ENCODE measurements at regions of chr6 and their contacts with region 1.

Region 1: DNA sequence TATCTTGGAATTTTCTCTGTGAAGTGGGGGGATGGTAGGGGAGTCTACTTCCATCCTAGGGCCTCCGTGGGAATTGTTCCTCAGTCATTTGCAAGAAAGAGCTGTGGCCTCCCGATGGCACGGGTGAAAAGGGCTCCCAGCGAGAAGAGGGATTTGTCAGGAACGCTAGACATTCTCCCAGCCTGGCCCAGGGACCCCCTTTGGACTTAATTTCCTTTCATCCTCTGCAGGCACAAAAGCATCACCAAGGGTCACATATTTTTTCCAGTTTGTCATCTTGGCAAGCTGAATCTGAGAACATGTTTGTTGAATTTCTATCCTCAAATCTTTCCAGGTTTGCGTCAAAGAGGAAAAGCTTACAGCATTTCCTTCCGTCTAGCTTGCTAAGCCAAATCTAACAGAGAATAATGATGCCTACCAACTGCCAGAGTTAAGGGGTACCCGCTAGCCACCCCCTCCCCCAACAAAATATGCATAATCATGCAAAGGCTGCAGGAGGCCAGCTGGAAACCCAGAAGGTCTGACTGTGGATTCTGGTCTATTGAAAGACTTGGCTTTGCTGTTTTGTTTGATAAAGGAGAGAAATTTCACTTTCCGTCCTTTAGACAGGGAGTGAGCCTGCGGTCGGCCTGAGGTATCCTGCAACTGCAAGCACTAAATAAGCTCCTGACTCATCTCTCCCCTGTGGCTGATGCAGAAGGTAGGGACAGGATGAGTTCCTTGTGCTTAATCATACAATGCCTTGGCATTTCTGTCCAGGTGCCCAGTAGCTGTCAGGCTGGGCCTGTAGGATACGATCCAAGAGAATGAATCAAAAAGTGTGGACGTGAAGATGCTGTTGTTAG is 23.1 kb downstream of the PSMG4 start:
- DNase-seq: no peak
- ATAC-seq: no peak
- H3K4me3 Mint-ChIP-seq: no peak overlapping the region
- H3K27ac Mint-ChIP-seq: no peak overlapping the region
- H3K4me1 Mint-ChIP-seq: peaks cover 3% of the 10 kb centered on the region
- H3K27me3 Mint-ChIP-seq: no peaks in the 10 kb centered on the region
- CTCF ChIP-seq: no peak

Region 2: DNA sequence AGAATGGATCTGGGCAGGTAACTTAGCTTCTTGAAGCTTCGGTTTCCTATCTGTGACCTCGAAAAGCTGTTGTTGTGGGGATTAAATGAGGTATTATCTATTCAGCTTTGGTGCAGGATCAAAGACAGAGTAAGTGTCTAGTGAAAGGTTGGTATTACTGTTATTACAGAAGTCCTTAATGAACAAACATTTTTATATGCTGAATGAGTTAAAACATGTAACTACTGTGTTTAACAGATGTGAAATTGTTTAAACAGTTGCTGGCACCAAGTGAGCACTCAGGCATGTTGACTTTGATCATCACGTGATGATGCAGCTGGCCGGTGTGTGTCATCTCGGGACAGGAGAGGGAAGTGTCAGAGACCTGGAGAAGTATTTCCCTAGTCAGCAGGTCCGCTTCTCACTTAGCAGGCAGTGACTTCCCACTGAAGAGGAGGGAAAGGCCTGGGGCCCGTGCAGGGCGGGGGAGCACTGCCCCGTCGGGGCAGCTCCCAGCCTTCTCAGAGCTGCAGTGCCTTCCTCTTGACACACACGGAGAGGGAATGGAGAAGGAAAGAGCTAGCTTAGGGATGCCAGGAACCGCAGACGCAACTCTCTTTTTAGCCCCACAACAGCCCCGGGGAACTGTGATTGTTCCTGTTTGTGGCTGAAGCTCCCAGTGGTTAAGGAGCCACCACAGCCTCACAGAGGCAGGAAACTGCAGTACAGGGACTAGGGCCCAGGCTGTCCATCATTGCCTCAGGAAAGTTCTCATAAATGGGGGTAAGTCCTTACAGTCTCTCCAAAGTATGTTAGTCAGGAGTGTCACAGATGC is 142.6 kb before region 1 on chr6:
- CTCF ChIA-PET with region 1: no interaction called
- POLR2A ChIA-PET with region 1: no interaction called
- intact Hi-C with region 1: no loop called
- DNase-seq: no peak
- ATAC-seq: peak; percentile 79
- H3K4me3 Mint-ChIP-seq: no peak overlapping the region
- H3K27ac Mint-ChIP-seq: peak overlapping the region; percentile 2
- H3K4me1 Mint-ChIP-seq: peaks cover 12% of the 10 kb centered on the region
- H3K27me3 Mint-ChIP-seq: no peaks in the 10 kb centered on the region
- CTCF ChIP-seq: no peak

Region 3: DNA sequence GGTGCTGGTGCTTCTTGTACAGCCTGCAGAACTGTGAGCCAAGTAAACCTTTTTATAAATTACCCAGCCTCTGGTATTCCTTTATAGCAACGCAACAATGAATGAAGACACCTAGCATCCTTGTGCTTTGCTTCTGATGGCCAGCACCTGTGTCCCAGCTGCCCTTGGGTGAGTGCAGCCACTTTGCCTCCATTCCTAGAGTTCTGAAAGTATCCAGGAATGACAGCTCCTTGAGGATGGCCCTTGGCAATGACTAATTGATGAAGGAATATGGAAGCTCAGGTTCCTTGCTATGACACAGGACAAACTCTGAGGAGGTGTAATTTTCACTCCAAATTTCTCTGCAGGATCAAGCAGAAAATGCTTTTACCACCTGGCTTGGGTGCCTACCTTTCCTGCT is 230.1 kb after region 1 on chr6:
- CTCF ChIA-PET with region 1: no interaction called
- POLR2A ChIA-PET with region 1: no interaction called
- intact Hi-C with region 1: loop called (anchors 1 kb)
- DNase-seq: no peak
- ATAC-seq: no peak
- H3K4me3 Mint-ChIP-seq: no peak overlapping the region
- H3K27ac Mint-ChIP-seq: no peak overlapping the region
- H3K4me1 Mint-ChIP-seq: no peaks in the 10 kb centered on the region
- H3K27me3 Mint-ChIP-seq: peaks cover 22% of the 10 kb centered on the region
- CTCF ChIP-seq: no peak

Region 4: DNA sequence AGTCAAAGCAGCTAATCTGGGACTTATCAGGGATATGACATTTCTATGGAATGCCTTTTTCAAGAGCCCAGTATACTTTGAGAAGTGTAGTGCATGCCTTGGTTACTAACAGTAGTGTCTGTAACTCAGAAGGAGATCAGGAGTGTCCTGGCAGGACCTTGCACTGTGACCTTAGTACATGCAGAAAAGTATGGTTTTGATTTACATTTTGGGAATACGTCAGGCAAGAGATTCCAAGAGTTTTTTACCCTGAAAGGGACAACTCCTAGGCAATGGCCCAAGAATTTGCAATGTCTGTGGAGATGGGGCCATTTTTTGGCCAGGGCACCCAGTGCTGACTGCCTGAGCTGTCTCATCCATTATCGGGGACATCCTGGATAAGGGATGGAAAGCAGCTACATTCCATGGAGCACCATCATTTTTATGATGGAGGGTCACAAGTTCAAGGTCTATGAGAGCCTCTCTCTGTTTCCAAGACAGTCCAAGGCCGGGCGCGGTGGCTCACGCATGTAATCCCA is 647.5 kb after region 1 on chr6:
- CTCF ChIA-PET with region 1: no interaction called
- POLR2A ChIA-PET with region 1: no interaction called
- intact Hi-C with region 1: loop called (anchors 1 kb)
- DNase-seq: no peak
- ATAC-seq: no peak
- H3K4me3 Mint-ChIP-seq: no peak overlapping the region
- H3K27ac Mint-ChIP-seq: no peak overlapping the region
- H3K4me1 Mint-ChIP-seq: no peaks in the 10 kb centered on the region
- H3K27me3 Mint-ChIP-seq: peaks cover 2% of the 10 kb centered on the region
- CTCF ChIP-seq: no peak

Region 5: GRCh38 chr6:3990692-3991501 is 709.0 kb after region 1 on chr6:
- CTCF ChIA-PET with region 1: interaction called, 3 read pairs
- POLR2A ChIA-PET with region 1: no interaction called
- intact Hi-C with region 1: loop called (anchors 1 kb)
- DNase-seq: peak; percentile 59
- ATAC-seq: peak; percentile 95
- H3K4me3 Mint-ChIP-seq: no peak overlapping the region
- H3K27ac Mint-ChIP-seq: no peak overlapping the region
- H3K4me1 Mint-ChIP-seq: peaks cover 9% of the 10 kb centered on the region
- H3K27me3 Mint-ChIP-seq: no peaks in the 10 kb centered on the region
- CTCF ChIP-seq: no peak

Region 6: GRCh38 chr6:4155848-4156466 is 874.1 kb after region 1 on chr6:
- CTCF ChIA-PET with region 1: no interaction called
- POLR2A ChIA-PET with region 1: no interaction called
- intact Hi-C with region 1: loop called (anchors 1 kb)
- DNase-seq: no peak
- ATAC-seq: peak; percentile 84
- H3K4me3 Mint-ChIP-seq: no peak overlapping the region
- H3K27ac Mint-ChIP-seq: peak overlapping the region; percentile 5
- H3K4me1 Mint-ChIP-seq: peaks cover 34% of the 10 kb centered on the region
- H3K27me3 Mint-ChIP-seq: no peaks in the 10 kb centered on the region
- CTCF ChIP-seq: peak; percentile 68